Mammary epithelial cell (primary cell): ENCODE measurements at regions of chr9 and their contacts with region 1.

Region 1: GRCh38 chr9:36738318-36738976 is 165.8 kb downstream of the MELK start:
- DNase-seq: peak; percentile 74
- H3K4me3 ChIP-seq: no peak overlapping the region
- H3K27ac ChIP-seq: peak overlapping the region; percentile 58
- H3K4me1 ChIP-seq: peaks cover 4% of the 10 kb centered on the region
- H3K27me3 ChIP-seq: no peaks in the 10 kb centered on the region
- CTCF ChIP-seq: no peak

Region 2: DNA sequence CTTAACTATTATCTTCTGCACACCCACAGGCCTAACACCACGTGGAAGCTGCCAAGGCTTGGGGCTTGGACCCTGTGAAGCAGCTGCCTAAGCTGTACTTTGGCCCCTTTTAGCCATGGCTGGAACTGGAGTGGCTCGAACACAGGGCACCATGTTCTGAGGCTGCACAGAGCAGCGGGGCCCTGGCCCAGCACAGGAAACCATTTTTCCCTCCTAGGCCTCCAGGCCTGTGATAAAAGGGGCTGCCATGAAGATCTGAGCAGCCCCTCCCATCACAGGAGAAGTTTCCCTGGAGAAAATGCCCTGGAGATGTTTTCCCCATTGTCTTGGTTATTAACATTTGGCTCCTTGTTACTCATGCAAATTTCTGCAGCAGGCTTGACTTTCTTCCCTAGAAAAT is 39.5 kb before region 1 on chr9:
- CTCF ChIA-PET with region 1: no interaction called
- dilution Hi-C with region 1: loop called (anchors 5 kb)
- in situ Hi-C with region 1: no loop called
- intact Hi-C with region 1: no loop called
- DNase-seq: no peak
- H3K4me3 ChIP-seq: no peak overlapping the region
- H3K27ac ChIP-seq: no peak overlapping the region
- H3K4me1 ChIP-seq: no peaks in the 10 kb centered on the region
- H3K27me3 ChIP-seq: no peaks in the 10 kb centered on the region
- CTCF ChIP-seq: no peak

Region 3: GRCh38 chr9:36781533-36781932 is 43.1 kb after region 1 on chr9:
- CTCF ChIA-PET with region 1: no interaction called
- dilution Hi-C with region 1: loop called (anchors 5 kb)
- in situ Hi-C with region 1: no loop called
- intact Hi-C with region 1: no loop called
- DNase-seq: no peak
- H3K4me3 ChIP-seq: no peak overlapping the region
- H3K27ac ChIP-seq: no peak overlapping the region
- H3K4me1 ChIP-seq: no peaks in the 10 kb centered on the region
- H3K27me3 ChIP-seq: peaks cover 6% of the 10 kb centered on the region
- CTCF ChIP-seq: no peak